GM12878 (cell line): ENCODE measurements at regions of chr3 and their contacts with region 1.

Region 1: GRCh38 chr3:51391075-51391567 is at the start of gene RBM15B:
- DNase-seq: peak; percentile 80
- ATAC-seq: peak; percentile 96
- H3K4me3 ChIP-seq: peak within 1 kb of the TSS; percentile 83
- H3K27ac ChIP-seq: peak within 1 kb of the TSS; percentile 73
- H3K4me1 ChIP-seq: peaks cover 25% of the 10 kb centered on the region
- H3K27me3 ChIP-seq: no peaks in the 10 kb centered on the region
- CTCF ChIP-seq: peak; percentile 84 to 93 (median 93); a peak in 4 of 6 replicates
- EP300 ChIP-seq: 0 out of 4 replicates have a peak, but pooled peaks of 1 of the 2 experiments have one; percentile 12
- POLR2A ChIP-seq: peak; percentile 81
- RAD21 ChIP-seq: peak; percentile 44; the same call in 1 of the 2 replicates
- polyA plus RNA-seq, gene RBM15B: 2.4 to 3.0 TPM

Region 2: GRCh38 chr3:51379301-51379700 is 11.8 kb before region 1 on chr3:
- CTCF ChIA-PET with region 1: interaction called, 13 read pairs
- POLR2A ChIA-PET with region 1: no interaction called
- RAD21 ChIA-PET with region 1: no interaction called
- SMC1A ChIA-PET with region 1: interaction called, 4 read pairs
- in situ Hi-C with region 1: no loop called
- intact Hi-C with region 1: no loop called
- DNase-seq: no peak
- ATAC-seq: no peak
- H3K4me3 ChIP-seq: no peak overlapping the region
- H3K27ac ChIP-seq: no peak overlapping the region
- H3K4me1 ChIP-seq: peaks cover 9% of the 10 kb centered on the region
- H3K27me3 ChIP-seq: no peaks in the 10 kb centered on the region; a peak in 1 of 4 replicates
- CTCF ChIP-seq: no peak
- EP300 ChIP-seq: no peak
- POLR2A ChIP-seq: no peak
- RAD21 ChIP-seq: no peak

Region 3: DNA sequence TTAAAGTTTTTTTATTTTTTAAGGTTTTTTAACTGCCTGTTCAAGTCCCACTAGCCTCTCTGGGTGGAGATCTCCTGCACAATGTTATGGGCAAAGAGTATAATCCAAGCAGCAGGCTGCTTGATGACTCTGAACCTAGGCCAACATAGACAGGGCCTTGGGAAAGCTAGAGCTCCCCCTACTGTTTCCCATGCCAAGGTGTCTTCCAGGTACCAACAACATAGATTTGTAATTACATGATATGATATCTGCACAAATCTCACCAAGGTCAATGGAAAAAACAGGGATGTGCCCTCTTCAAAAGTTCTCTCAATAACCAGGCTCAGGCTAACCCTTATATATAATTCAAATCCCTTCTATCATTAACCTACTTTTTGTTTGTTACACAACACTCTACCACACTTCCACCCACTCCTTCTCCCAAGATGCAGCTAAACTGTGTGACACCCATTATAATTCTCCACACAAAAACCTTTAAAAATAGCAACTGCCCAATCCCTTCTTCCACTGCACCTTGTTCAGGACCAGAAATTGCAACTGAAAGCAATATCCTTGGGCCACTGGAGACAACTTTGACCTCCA is 43.7 kb after region 1 on chr3:
- CTCF ChIA-PET with region 1: interaction called, 17 read pairs
- POLR2A ChIA-PET with region 1: interaction called, 3 read pairs
- RAD21 ChIA-PET with region 1: no interaction called
- SMC1A ChIA-PET with region 1: no interaction called
- in situ Hi-C with region 1: no loop called
- intact Hi-C with region 1: no loop called
- DNase-seq: peak; percentile 5
- ATAC-seq: peak; percentile 94
- H3K4me3 ChIP-seq: no peak overlapping the region
- H3K27ac ChIP-seq: no peak overlapping the region
- H3K4me1 ChIP-seq: no peaks in the 10 kb centered on the region
- H3K27me3 ChIP-seq: no peaks in the 10 kb centered on the region
- CTCF ChIP-seq: peak; percentile 60 to 84 (median 68)
- EP300 ChIP-seq: no peak
- POLR2A ChIP-seq: no peak
- RAD21 ChIP-seq: peak; percentile 39

Region 4: GRCh38 chr3:51799879-51800749 is 409.0 kb after region 1 on chr3:
- CTCF ChIA-PET with region 1: interaction called, 14 read pairs
- POLR2A ChIA-PET with region 1: no interaction called
- RAD21 ChIA-PET with region 1: interaction called, 5 read pairs
- SMC1A ChIA-PET with region 1: no interaction called
- in situ Hi-C with region 1: no loop called
- intact Hi-C with region 1: loop called (anchors 5 kb)
- DNase-seq: peak; percentile 5
- ATAC-seq: peak; percentile 71
- H3K4me3 ChIP-seq: no peak overlapping the region
- H3K27ac ChIP-seq: no peak overlapping the region
- H3K4me1 ChIP-seq: no peaks in the 10 kb centered on the region
- H3K27me3 ChIP-seq: no peaks in the 10 kb centered on the region; a peak in 1 of 4 replicates
- CTCF ChIP-seq: peak; percentile 70 to 74 (median 73); a peak in 5 of 6 replicates
- EP300 ChIP-seq: no peak
- POLR2A ChIP-seq: no peak
- RAD21 ChIP-seq: peak; percentile 72